Activated CD8-positive, alpha-beta T cell treated with anti-CD3 and anti-CD28 coated beads for 36 hours (primary cell): ENCODE measurements at regions of chr11 and their contacts with region 1.

Region 1: GRCh38 chr11:111723595-111723994 is 42.6 kb downstream of the PPP2R1B start:
- DNase-seq: no peak
- ATAC-seq: no peak
- H3K4me3 Mint-ChIP-seq: no peak overlapping the region
- H3K27ac Mint-ChIP-seq: no peak overlapping the region
- H3K4me1 Mint-ChIP-seq: no peaks in the 10 kb centered on the region
- H3K27me3 Mint-ChIP-seq: no peaks in the 10 kb centered on the region
- CTCF ChIP-seq: no peak

Region 2: DNA sequence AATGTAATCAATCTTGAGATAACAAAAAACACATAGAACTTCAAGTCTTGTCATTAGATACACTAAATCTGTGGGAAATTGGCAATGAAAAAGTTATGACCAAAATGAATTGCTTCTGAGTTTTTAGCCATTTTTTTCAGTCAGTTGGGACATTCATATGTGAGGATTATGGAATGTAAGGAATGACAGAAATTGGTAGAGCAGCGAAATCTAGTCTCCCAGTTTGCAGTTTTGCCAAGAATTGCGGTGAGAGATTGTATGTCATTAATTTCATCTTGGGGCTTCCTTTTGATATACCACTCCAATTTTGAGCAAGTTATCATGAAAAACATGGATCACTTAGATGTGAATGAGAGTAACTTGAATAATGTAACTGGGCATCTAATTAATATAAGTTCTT is 71.4 kb before region 1 on chr11:
- CTCF ChIA-PET with region 1: no interaction called
- POLR2A ChIA-PET with region 1: no interaction called
- intact Hi-C with region 1: no loop called
- DNase-seq: no peak
- ATAC-seq: no peak
- H3K4me3 Mint-ChIP-seq: no peak overlapping the region
- H3K27ac Mint-ChIP-seq: no peak overlapping the region
- H3K4me1 Mint-ChIP-seq: peaks cover 5% of the 10 kb centered on the region
- H3K27me3 Mint-ChIP-seq: no peaks in the 10 kb centered on the region
- CTCF ChIP-seq: no peak

Region 3: DNA sequence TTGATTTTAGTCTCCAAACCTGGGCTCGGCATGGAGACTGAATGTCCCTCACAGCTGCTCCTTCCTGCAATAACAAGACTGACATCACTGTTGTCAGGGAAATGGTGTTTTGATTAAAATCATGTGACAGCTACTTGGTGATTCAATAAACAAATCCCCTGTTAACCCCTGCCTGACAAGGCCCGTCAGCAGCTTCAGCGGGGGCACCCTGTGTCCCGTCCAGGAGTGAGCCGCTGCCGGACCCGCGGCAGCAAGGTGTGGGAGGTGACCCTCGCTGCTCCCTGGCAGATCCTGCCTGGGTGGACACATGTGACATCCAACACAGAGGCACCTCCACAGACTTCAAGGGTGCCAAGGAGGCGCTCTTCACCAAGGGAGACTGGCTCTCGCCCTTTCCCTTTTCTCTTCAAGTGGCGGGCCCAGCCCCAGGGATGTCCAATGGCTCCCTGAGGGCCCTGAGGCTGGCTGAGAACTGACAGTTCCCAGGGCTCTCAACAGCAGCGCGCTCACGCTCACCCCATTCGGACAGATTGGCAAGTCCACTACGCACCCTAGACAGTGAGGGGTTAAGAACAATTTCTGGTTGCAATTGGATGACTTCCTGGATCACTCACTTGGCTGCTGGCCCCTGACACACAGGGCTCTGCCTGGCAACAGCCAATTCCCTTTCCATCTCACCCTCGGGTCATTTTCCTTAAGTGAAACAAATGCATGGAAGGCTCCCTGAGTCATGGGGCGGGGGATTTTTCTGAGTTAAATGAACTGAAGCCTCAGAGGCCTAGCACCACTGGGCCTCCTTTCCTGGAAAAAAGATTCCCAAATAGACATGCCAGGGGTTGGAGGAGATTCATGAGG is 11.9 kb after region 1 on chr11:
- CTCF ChIA-PET with region 1: no interaction called
- POLR2A ChIA-PET with region 1: interaction called, 11 read pairs
- intact Hi-C with region 1: no loop called
- DNase-seq: no peak
- ATAC-seq: no peak
- H3K4me3 Mint-ChIP-seq: no peak overlapping the region
- H3K27ac Mint-ChIP-seq: peak overlapping the region; percentile 33
- H3K4me1 Mint-ChIP-seq: no peaks in the 10 kb centered on the region
- H3K27me3 Mint-ChIP-seq: no peaks in the 10 kb centered on the region
- CTCF ChIP-seq: no peak